PC-3 (cell line): ENCODE measurements at regions of chr3 and their contacts with region 1.

Region 1: GRCh38 chr3:44477312-44478030 is at the start of gene ZNF445:
- DNase-seq: peak; percentile 83
- ATAC-seq: peak; percentile 90
- H3K4me3 ChIP-seq: peak within 1 kb of the TSS; percentile 83
- H3K27ac ChIP-seq: no peak within 1 kb of the TSS
- H3K4me1 ChIP-seq: peaks cover 5% of the 10 kb centered on the region; the same call in 1 of the 2 replicates
- H3K27me3 ChIP-seq: no peaks in the 10 kb centered on the region
- CTCF ChIP-seq: no peak
- total RNA-seq, gene ZNF445: 7.7 and 8.2 TPM in 2 replicates

Region 2: GRCh38 chr3:44338010-44338827 is 139.3 kb before region 1 on chr3 and contains the start of gene TCAIM:
- CTCF ChIA-PET with region 1: no interaction called
- POLR2A ChIA-PET with region 1: no interaction called
- intact Hi-C with region 1: loop called (anchors 5 kb)
- DNase-seq: peak; percentile 98
- ATAC-seq: peak; percentile 91
- H3K4me3 ChIP-seq: peak within 1 kb of the TSS; percentile 79
- H3K27ac ChIP-seq: peak within 1 kb of the TSS; percentile 82
- H3K4me1 ChIP-seq: peaks cover 17% of the 10 kb centered on the region
- H3K27me3 ChIP-seq: no peaks in the 10 kb centered on the region
- CTCF ChIP-seq: no peak
- total RNA-seq, gene TCAIM: 19.1 and 20.2 TPM in 2 replicates

Region 3: GRCh38 chr3:44439499-44440295 is 37.8 kb before region 1 on chr3:
- CTCF ChIA-PET with region 1: no interaction called
- POLR2A ChIA-PET with region 1: no interaction called
- intact Hi-C with region 1: no loop called
- DNase-seq: no peak
- ATAC-seq: no peak
- H3K4me3 ChIP-seq: no peak overlapping the region
- H3K27ac ChIP-seq: no peak overlapping the region
- H3K4me1 ChIP-seq: no peaks in the 10 kb centered on the region
- H3K27me3 ChIP-seq: no peaks in the 10 kb centered on the region
- CTCF ChIP-seq: no peak

Region 4: DNA sequence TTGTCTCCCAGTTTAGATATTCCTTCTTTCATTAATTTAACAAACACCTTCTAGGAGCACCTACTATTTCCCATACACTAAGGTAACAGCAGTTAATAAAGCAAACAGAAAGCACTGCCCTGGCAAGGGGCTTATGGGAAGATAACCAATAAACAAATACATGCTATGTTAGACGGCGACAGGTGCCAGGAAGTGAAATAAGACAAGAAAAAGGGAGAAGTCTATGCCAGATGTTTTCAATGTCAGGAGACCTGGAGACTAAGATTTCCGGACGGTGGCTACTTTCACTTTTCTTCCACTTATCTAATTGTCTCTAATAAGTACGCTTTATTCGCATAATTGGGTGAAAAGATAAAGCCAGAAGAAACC is 32.5 kb after region 1 on chr3:
- CTCF ChIA-PET with region 1: no interaction called
- POLR2A ChIA-PET with region 1: no interaction called
- intact Hi-C with region 1: loop called (anchors 1 kb)
- DNase-seq: peak; percentile 17
- ATAC-seq: peak; percentile 44
- H3K4me3 ChIP-seq: peak overlapping the region; percentile 81
- H3K27ac ChIP-seq: no peak overlapping the region
- H3K4me1 ChIP-seq: peaks cover 15% of the 10 kb centered on the region
- H3K27me3 ChIP-seq: no peaks in the 10 kb centered on the region
- CTCF ChIP-seq: no peak

Region 5: DNA sequence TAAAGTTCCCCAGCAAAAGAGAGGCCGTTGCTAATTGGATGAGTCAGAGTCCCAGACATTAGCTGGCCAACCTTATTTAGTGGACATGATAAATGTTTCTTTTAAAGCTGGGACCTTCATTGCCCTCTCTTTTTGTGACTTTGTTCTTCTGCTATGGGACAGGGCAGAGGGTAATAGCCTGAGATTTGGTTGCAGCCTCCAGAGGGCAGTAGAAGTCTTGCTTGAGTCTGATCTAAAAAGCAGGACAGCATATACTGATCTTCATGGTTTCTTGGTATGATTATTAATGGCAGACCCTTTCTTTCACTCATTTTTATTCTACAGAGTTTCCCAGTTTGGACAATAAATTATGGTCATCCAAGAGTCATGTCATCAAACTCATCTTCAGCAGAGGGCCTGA is 52.5 kb after region 1 on chr3:
- CTCF ChIA-PET with region 1: no interaction called
- POLR2A ChIA-PET with region 1: no interaction called
- intact Hi-C with region 1: no loop called
- DNase-seq: peak; percentile 41
- ATAC-seq: no peak
- H3K4me3 ChIP-seq: no peak overlapping the region
- H3K27ac ChIP-seq: no peak overlapping the region
- H3K4me1 ChIP-seq: no peaks in the 10 kb centered on the region
- H3K27me3 ChIP-seq: peaks cover 6% of the 10 kb centered on the region; the same call in 1 of the 2 replicates
- CTCF ChIP-seq: peak; percentile 65